Breast epithelium (tissue), 4 donors: ENCODE measurements at regions of chr1 and their contacts with region 1.

Region 1: GRCh38 chr1:214551436-214552173 is at the start of gene PTPN14:
- DNase-seq: peak; percentile 85 to 93
- H3K4me3 ChIP-seq: peak within 1 kb of the TSS; percentile 74 to 96 (median 87)
- H3K27ac ChIP-seq: peak within 1 kb of the TSS; percentile 98 to 99
- H3K4me1 ChIP-seq: peaks cover 0 to 5% of the 10 kb centered on the region in 2 donors
- H3K27me3 ChIP-seq: no peaks in the 10 kb centered on the region
- CTCF ChIP-seq: peak in 1 of 3 donors; percentile 38
- POLR2A ChIP-seq: peak; percentile 31
- total RNA-seq, gene PTPN14: 30.4 to 57.4 (median 49.5) TPM

Region 2: GRCh38 chr1:214213136-214213535 is 338.5 kb before region 1 on chr1:
- intact Hi-C with region 1: loop called (anchors 5 kb)
- DNase-seq: no peak
- H3K4me3 ChIP-seq: no peak overlapping the region
- H3K27ac ChIP-seq: no peak overlapping the region
- H3K4me1 ChIP-seq: no peaks in the 10 kb centered on the region
- H3K27me3 ChIP-seq: no peaks in the 10 kb centered on the region
- CTCF ChIP-seq: no peak
- POLR2A ChIP-seq: no peak

Region 3: DNA sequence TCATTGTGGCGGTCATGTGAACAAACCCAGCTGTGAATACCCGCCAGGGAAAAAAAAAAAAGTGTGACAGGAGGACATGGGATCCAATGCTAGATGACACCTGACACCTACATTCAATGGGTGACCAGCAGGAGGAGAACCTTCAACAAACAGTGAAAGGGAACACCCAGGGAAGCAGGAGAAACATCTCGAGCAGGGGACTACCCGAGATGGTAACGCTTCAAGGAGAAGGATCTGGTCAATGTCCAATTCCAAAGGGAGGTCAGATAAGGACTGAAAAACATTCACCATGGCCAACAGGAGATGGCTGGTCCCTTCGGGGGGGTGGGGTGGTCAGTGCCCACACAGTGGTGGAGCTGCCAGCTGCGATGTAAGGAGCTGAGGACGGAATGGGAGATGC is 46.5 kb before region 1 on chr1:
- intact Hi-C with region 1: no loop called
- DNase-seq: no peak
- H3K4me3 ChIP-seq: no peak overlapping the region
- H3K27ac ChIP-seq: no peak overlapping the region
- H3K4me1 ChIP-seq: no peaks in the 10 kb centered on the region
- H3K27me3 ChIP-seq: no peaks in the 10 kb centered on the region
- CTCF ChIP-seq: no peak
- POLR2A ChIP-seq: no peak